ENCODE measurements at regions of chr2 and their contacts with region 1.

Region 1: DNA sequence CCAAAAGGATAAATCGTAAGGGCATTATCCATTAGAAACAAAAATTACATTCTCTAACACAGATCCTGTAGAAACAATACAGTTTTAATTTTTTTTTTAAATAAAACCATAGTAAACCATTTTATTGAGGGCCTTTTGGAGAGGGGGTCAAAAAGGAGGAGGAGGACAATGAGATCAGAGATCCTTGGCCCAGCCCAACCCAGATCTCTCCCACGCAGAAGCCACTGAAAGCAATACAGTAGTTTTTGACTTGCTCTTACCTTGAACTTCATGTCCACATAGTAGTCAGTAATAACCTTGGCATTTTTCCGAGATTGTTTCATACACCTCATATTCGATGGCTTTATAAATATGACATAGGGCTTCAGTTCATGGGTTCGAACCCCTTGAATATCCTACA is 4.1 kb upstream of the TMEM237 start:
- DNase-seq: no peak
- H3K4me3 ChIP-seq: no peak overlapping the region
- CTCF ChIP-seq: no peak

Region 2: GRCh38 chr2:201696151-201696659 is 48.8 kb after region 1 on chr2:
- in situ Hi-C with region 1: loop called (anchors 5 kb)
- DNase-seq: peak; percentile 85
- H3K4me3 ChIP-seq: no peak overlapping the region
- CTCF ChIP-seq: no peak